ENCODE measurements at regions of chr4 and their contacts with region 1.

Region 1: DNA sequence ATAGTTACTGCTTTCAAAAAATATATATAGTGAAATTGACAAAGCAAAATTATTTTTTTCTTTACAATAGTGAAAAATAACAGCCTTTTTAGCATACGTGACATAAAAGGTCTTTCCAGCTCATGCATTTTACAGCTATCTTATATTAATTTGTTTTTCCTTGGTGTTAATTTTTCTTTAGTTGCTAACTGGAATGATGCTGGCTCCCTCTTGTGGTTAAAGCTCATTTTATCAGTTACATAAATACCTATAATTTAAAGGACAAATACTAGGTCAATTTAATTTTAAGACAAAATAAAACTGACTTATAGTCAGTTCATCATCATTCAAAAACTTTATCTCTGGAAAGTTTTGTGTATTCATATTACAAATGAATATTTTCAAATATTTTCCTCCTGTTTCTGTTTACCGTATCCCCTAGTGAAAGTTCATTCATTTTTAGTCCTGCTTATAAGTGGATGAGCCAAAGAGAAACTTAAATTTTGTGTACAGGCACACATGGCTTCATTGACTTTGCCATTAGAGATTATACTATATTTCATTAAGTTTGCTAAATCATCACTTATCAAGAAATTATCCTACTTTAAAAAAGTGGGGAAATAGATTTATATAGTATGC is 9.9 kb upstream of the ANAPC4 start:
- DNase-seq: peak; percentile 63
- H3K4me3 ChIP-seq: no peak overlapping the region
- H3K27ac ChIP-seq: no peak overlapping the region
- H3K4me1 ChIP-seq: no peaks in the 10 kb centered on the region
- H3K27me3 ChIP-seq: no peaks in the 10 kb centered on the region
- CTCF ChIP-seq: peak; percentile 24 to 34
- POLR2A ChIP-seq: no peak

Region 2: DNA sequence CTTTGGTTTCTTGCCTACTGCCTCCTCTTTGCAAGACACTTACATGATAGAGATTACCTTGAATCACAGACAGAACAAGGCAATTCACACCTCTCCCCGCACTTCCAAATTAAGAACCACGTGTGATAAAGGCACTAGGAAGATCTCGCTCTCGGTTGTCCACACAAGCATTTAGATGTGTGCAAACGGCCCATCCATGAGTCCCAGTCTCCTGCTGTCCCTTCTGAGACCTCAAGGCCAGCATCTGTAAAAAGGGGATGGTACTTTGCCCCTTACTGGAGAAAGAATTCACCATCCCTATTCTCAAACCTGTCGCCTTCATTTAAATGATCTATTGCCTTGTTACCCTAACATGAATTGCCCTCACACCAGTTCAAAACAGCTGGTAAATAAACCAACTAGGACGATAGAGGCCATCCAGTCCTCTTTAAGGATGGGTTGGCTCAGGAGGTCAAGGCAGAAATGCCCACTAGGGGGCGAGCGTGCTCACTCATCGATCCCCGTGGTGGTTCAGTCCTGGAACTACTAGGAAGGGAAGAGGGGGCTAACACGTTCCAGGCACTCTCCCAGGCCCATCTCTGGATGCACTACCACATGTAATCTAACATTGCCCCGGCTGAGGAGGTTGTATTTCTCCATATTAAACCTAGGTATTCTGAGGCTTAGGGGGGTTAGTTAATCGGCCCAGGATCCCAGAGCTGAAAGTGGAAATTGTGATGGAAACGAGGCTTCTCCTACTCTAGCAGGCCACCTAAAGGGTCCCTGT is 878.5 kb before region 1 on chr4:
- CTCF ChIA-PET with region 1: interaction called, 10 read pairs
- POLR2A ChIA-PET with region 1: no interaction called
- dilution Hi-C with region 1: no loop called
- intact Hi-C with region 1: loop called (anchors 10 kb)
- DNase-seq: peak; percentile 67
- H3K4me3 ChIP-seq: no peak overlapping the region
- H3K27ac ChIP-seq: no peak overlapping the region
- H3K4me1 ChIP-seq: no peaks in the 10 kb centered on the region
- H3K27me3 ChIP-seq: peaks cover 6 to 9% of the 10 kb centered on the region in 2 experiments
- CTCF ChIP-seq: peak; percentile 88 to 90
- POLR2A ChIP-seq: no peak

Region 3: DNA sequence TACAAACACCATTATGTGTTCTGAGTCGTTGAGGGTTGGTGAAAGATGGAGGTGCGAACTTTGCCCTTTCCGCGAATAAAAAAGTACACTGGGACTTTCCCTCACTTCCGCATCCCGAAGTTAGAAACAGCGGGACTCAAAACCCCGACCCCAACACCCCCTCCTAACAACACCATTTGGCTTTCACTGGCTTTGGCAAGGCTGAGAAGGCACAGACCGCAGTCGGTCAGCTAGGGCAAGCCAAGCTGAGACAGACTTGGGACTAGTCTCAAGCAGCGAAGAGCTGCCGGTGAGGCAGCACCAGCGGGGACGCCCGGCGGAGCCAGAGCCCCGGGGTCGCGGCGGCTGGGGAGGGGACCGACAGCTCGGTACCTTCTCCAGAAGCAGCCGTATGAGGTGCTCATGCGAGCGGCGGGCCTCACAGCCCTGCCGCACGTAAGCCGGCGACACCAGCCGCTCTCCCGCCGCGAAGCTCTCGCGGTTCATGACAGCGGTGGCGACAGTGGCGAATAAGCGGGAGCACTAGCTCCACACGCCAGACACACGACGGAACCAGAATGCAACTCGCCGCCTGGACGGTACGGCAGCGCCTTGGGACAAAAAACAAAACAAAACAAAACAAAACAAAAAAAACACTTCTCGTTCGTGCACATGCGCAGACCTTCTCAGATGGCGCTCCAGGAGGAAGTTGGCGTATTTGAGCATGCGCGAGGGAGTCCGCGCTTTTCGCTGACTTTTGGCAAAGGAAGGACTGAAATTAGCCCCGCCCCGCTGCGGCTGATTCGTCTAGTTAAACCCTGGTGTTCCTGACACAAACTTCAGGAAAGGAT is 207.0 kb before region 1 on chr4 and contains the start of gene SEPSECS:
- CTCF ChIA-PET with region 1: interaction called, 16 read pairs
- POLR2A ChIA-PET with region 1: no interaction called
- dilution Hi-C with region 1: no loop called
- intact Hi-C with region 1: loop called (anchors 5 kb)
- DNase-seq: peak; percentile 99
- H3K4me3 ChIP-seq: peak within 1 kb of the TSS; percentile 39 to 94 (median 84)
- H3K27ac ChIP-seq: peak within 1 kb of the TSS; percentile 81
- H3K4me1 ChIP-seq: peaks cover 7% of the 10 kb centered on the region
- H3K27me3 ChIP-seq: no peaks in the 10 kb centered on the region
- CTCF ChIP-seq: no peak
- POLR2A ChIP-seq: peak; percentile 87
- total RNA-seq, gene SEPSECS: 5.8 and 8.3 TPM in 2 replicates

Region 4: DNA sequence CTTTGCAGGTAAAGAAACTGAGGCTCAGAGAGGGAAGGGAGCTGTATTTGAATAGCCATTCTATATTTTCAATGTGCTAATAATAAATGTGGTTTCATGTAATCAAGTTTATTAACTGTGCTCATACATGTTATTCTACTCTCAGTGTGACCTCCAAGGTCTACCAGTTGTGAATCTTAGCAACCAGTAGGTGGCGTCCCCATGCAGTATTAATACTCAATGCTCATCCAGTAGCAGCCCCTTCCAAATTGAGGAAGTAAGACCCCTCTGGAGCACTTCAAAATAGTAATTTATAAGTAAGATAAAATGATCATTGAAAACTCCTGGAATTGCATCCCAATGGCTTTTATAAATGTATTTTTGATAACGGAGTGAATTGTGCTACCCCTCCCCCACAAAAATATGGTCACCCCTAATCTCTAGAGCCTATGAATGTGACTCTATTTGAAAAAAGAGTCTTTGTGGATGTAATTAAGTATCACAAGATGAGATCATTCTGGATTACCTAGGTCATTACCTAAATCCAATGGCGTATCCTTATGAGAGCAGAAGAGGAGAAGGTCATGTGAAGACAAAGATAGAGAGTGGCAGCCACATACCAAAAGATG is 186.5 kb before region 1 on chr4:
- CTCF ChIA-PET with region 1: interaction called, 52 read pairs
- POLR2A ChIA-PET with region 1: no interaction called
- dilution Hi-C with region 1: no loop called
- intact Hi-C with region 1: loop called (anchors 1 kb)
- DNase-seq: peak; percentile 36
- H3K4me3 ChIP-seq: no peak overlapping the region
- H3K27ac ChIP-seq: no peak overlapping the region
- H3K4me1 ChIP-seq: no peaks in the 10 kb centered on the region
- H3K27me3 ChIP-seq: no peaks in the 10 kb centered on the region
- CTCF ChIP-seq: peak; percentile 48 to 55
- POLR2A ChIP-seq: no peak

Region 5: GRCh38 chr4:25351777-25352416 is 15.2 kb before region 1 on chr4:
- CTCF ChIA-PET with region 1: interaction called, 55 read pairs
- POLR2A ChIA-PET with region 1: no interaction called
- dilution Hi-C with region 1: no loop called
- intact Hi-C with region 1: no loop called
- DNase-seq: peak; percentile 27
- H3K4me3 ChIP-seq: no peak overlapping the region
- H3K27ac ChIP-seq: no peak overlapping the region
- H3K4me1 ChIP-seq: peaks cover 6% of the 10 kb centered on the region
- H3K27me3 ChIP-seq: no peaks in the 10 kb centered on the region
- CTCF ChIP-seq: no peak
- POLR2A ChIP-seq: no peak